ENCODE measurements at regions of chr6 and their contacts with region 1.

Region 1: GRCh38 chr6:125974214-125974866 is 12.0 kb upstream of the TRMT11 start:
- DNase-seq: peak; percentile 67
- ATAC-seq: peak; percentile 56
- H3K4me3 ChIP-seq: no peak overlapping the region
- H3K4me3 Mint-ChIP-seq: no peak overlapping the region
- H3K27ac ChIP-seq: peak overlapping the region in 1 of 2 donors; percentile 38
- H3K27ac Mint-ChIP-seq: no peak overlapping the region
- H3K4me1 ChIP-seq: peaks cover 0 to 4% of the 10 kb centered on the region in 2 donors
- H3K4me1 Mint-ChIP-seq: peaks cover 14% of the 10 kb centered on the region
- H3K27me3 ChIP-seq: no peaks in the 10 kb centered on the region
- H3K27me3 Mint-ChIP-seq: no peaks in the 10 kb centered on the region
- CTCF ChIP-seq: peak; percentile 79

Region 2: GRCh38 chr6:125314019-125314581 is 660.2 kb before region 1 on chr6:
- CTCF ChIA-PET with region 1: interaction called, 65 read pairs
- POLR2A ChIA-PET with region 1: no interaction called
- intact Hi-C with region 1: loop called (anchors 1 kb)
- DNase-seq: peak; percentile 79
- ATAC-seq: peak; percentile 85
- H3K4me3 ChIP-seq: no peak overlapping the region
- H3K4me3 Mint-ChIP-seq: no peak overlapping the region
- H3K27ac ChIP-seq: no peak overlapping the region
- H3K27ac Mint-ChIP-seq: no peak overlapping the region
- H3K4me1 ChIP-seq: no peaks in the 10 kb centered on the region
- H3K4me1 Mint-ChIP-seq: no peaks in the 10 kb centered on the region
- H3K27me3 ChIP-seq: peaks cover 0 to 5% (median 2%) of the 10 kb centered on the region in 4 experiments
- H3K27me3 Mint-ChIP-seq: peaks cover 16% of the 10 kb centered on the region
- CTCF ChIP-seq: peak; percentile 82

Region 3: DNA sequence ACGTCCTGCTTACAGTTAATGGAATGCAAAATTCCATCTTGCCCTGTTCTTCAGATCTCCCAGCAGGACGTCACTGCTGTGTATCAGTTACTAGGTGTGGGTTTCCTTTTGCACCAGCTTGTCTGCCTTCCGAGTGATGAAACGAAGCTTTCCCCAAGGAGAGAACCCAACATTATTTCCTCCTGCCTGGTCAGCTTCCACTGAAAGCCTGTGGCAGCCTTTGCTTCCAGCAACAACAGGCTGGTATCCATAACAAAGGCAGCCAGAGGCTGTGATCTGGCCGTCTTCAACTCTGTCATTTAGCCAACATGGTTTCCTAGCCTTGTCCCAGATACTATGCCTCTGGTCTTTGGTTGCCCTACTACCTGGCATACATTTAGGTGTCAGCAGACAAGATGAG is 303.8 kb before region 1 on chr6:
- CTCF ChIA-PET with region 1: no interaction called
- POLR2A ChIA-PET with region 1: no interaction called
- intact Hi-C with region 1: no loop called
- DNase-seq: no peak
- ATAC-seq: no peak
- H3K4me3 ChIP-seq: no peak overlapping the region
- H3K4me3 Mint-ChIP-seq: no peak overlapping the region
- H3K27ac ChIP-seq: no peak overlapping the region
- H3K27ac Mint-ChIP-seq: no peak overlapping the region
- H3K4me1 ChIP-seq: no peaks in the 10 kb centered on the region
- H3K4me1 Mint-ChIP-seq: no peaks in the 10 kb centered on the region
- H3K27me3 ChIP-seq: peaks cover 0 to 3% (median 0%) of the 10 kb centered on the region in 4 experiments
- H3K27me3 Mint-ChIP-seq: peaks cover 31% of the 10 kb centered on the region
- CTCF ChIP-seq: no peak

Region 4: DNA sequence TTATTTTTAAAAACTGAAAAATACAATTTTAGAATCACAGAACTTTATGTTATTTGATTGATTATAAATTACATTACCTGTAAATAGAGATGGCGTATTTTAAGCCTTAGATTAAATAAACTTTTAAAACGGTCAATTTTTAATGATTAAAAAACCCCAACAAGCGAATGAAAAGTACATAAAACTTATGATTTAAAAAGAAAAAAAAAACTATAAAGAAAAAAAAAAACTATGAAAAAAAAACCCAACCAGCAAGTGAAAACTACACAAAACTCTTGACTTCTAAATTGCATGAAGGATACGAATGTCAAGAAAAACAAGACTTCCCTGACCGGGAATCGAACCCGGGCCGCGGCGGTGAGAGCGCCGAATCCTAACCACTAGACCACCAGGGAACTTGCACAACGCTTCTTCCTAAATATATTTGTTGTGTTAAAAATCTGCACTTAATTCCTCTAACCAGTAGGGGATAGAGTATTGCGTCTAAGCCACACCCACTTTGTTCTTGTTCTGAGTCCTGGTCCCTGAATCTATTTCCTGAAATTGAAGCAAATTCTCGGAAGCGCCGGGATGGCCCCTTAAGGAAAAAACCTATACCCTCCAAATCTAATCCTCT is 194.3 kb before region 1 on chr6:
- CTCF ChIA-PET with region 1: interaction called, 22 read pairs
- POLR2A ChIA-PET with region 1: no interaction called
- intact Hi-C with region 1: no loop called
- DNase-seq: peak; percentile 95
- ATAC-seq: peak; percentile 83
- H3K4me3 ChIP-seq: peak overlapping the region; percentile 67 to 100 (median 84)
- H3K4me3 Mint-ChIP-seq: no peak overlapping the region
- H3K27ac ChIP-seq: peak overlapping the region; percentile 81 to 95
- H3K27ac Mint-ChIP-seq: no peak overlapping the region
- H3K4me1 ChIP-seq: peaks cover 5 to 6% of the 10 kb centered on the region in 2 donors
- H3K4me1 Mint-ChIP-seq: peaks cover 11% of the 10 kb centered on the region
- H3K27me3 ChIP-seq: no peaks in the 10 kb centered on the region
- H3K27me3 Mint-ChIP-seq: peaks cover 5% of the 10 kb centered on the region
- CTCF ChIP-seq: peak; percentile 37

Region 5: DNA sequence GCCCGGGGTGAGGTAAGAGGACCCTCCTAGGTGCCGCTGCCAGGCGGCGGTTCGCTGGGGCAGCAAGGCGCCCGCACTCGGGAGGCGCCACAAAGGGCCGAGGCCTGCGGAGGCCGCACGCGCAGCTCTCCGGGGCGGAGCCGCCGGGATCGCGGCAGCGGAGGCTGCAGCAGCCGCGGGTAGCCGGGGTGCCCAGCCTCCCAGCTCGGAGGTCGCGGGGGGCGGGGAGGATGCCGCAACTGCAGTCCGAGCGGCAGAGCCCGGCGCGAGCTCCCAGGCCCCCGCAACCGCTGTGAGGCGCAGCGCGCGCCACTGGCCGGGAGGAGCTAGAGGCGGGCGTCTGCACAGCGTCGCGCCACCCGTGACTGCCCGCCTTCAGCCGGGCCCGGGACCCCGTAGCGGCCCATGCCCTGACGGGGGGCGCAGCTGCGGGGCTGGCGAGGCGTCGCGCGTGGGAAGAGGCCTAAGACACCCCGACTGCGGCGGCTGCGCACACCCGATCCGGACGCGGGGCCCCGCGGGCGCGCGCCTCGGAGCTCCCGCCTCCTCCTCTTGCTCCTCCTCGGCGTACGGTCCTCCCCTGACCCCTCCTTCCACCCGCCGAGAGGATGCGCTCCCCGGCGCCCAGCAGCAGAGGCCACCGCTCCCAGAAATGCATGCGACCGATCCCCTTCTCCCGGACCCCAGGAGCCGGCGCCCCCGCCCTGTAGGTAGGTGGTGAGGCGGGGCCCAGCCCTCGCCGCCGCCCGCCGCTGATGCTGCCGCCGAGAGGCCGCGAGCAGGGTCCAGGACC is 183.8 kb before region 1 on chr6 and contains the start of gene NCOA7:
- CTCF ChIA-PET with region 1: interaction called, 30 read pairs
- POLR2A ChIA-PET with region 1: no interaction called
- intact Hi-C with region 1: no loop called
- DNase-seq: peak; percentile 85
- ATAC-seq: peak; percentile 77
- H3K4me3 ChIP-seq: peak within 1 kb of the TSS; percentile 47 to 88 (median 78)
- H3K4me3 Mint-ChIP-seq: peak within 1 kb of the TSS; percentile 93
- H3K27ac ChIP-seq: peak within 1 kb of the TSS; percentile 70 to 85
- H3K27ac Mint-ChIP-seq: peak within 1 kb of the TSS; percentile 99
- H3K4me1 ChIP-seq: peaks cover 20 to 30% of the 10 kb centered on the region in 2 donors
- H3K4me1 Mint-ChIP-seq: peaks cover 49% of the 10 kb centered on the region
- H3K27me3 ChIP-seq: no peaks in the 10 kb centered on the region
- H3K27me3 Mint-ChIP-seq: peaks cover under 1% of the 10 kb centered on the region
- CTCF ChIP-seq: no peak
- total RNA-seq, gene NCOA7: 27.0 and 27.4 TPM in 2 replicates

Region 6: GRCh38 chr6:125858427-125859320 is 115.7 kb before region 1 on chr6:
- CTCF ChIA-PET with region 1: interaction called, 7 read pairs
- POLR2A ChIA-PET with region 1: no interaction called
- intact Hi-C with region 1: loop called (anchors 5 kb)
- DNase-seq: peak; percentile 47
- ATAC-seq: peak; percentile 39
- H3K4me3 ChIP-seq: no peak overlapping the region
- H3K4me3 Mint-ChIP-seq: no peak overlapping the region
- H3K27ac ChIP-seq: no peak overlapping the region
- H3K27ac Mint-ChIP-seq: no peak overlapping the region
- H3K4me1 ChIP-seq: no peaks in the 10 kb centered on the region
- H3K4me1 Mint-ChIP-seq: no peaks in the 10 kb centered on the region
- H3K27me3 ChIP-seq: no peaks in the 10 kb centered on the region
- H3K27me3 Mint-ChIP-seq: no peaks in the 10 kb centered on the region
- CTCF ChIP-seq: peak; percentile 47

Region 7: GRCh38 chr6:125906158-125906998 is 68.0 kb before region 1 on chr6:
- CTCF ChIA-PET with region 1: interaction called, 9 read pairs
- POLR2A ChIA-PET with region 1: no interaction called
- intact Hi-C with region 1: loop called (anchors 1 kb)
- DNase-seq: peak; percentile 48
- ATAC-seq: peak; percentile 45
- H3K4me3 ChIP-seq: no peak overlapping the region
- H3K4me3 Mint-ChIP-seq: no peak overlapping the region
- H3K27ac ChIP-seq: no peak overlapping the region
- H3K27ac Mint-ChIP-seq: no peak overlapping the region
- H3K4me1 ChIP-seq: no peaks in the 10 kb centered on the region
- H3K4me1 Mint-ChIP-seq: no peaks in the 10 kb centered on the region
- H3K27me3 ChIP-seq: no peaks in the 10 kb centered on the region
- H3K27me3 Mint-ChIP-seq: no peaks in the 10 kb centered on the region
- CTCF ChIP-seq: peak; percentile 68

Region 8: GRCh38 chr6:125986300-125987025 is 12.1 kb after region 1 on chr6 and contains the start of gene TRMT11:
- CTCF ChIA-PET with region 1: interaction called, 20 read pairs
- POLR2A ChIA-PET with region 1: interaction called, 3 read pairs
- intact Hi-C with region 1: no loop called
- DNase-seq: peak; percentile 86
- ATAC-seq: peak; percentile 92
- H3K4me3 ChIP-seq: peak within 1 kb of the TSS; percentile 78 to 94 (median 89)
- H3K4me3 Mint-ChIP-seq: peak within 1 kb of the TSS; percentile 35
- H3K27ac ChIP-seq: peak within 1 kb of the TSS; percentile 77 to 86
- H3K27ac Mint-ChIP-seq: no peak within 1 kb of the TSS
- H3K4me1 ChIP-seq: peaks cover 10 to 12% of the 10 kb centered on the region in 2 donors
- H3K4me1 Mint-ChIP-seq: peaks cover 5% of the 10 kb centered on the region
- H3K27me3 ChIP-seq: no peaks in the 10 kb centered on the region
- H3K27me3 Mint-ChIP-seq: no peaks in the 10 kb centered on the region
- CTCF ChIP-seq: no peak
- total RNA-seq, gene TRMT11: 29.3 and 30.4 TPM in 2 replicates

Measured in B cell (primary cell).